ENCODE measurements at regions of chr3 and their contacts with region 1.

Region 1: DNA sequence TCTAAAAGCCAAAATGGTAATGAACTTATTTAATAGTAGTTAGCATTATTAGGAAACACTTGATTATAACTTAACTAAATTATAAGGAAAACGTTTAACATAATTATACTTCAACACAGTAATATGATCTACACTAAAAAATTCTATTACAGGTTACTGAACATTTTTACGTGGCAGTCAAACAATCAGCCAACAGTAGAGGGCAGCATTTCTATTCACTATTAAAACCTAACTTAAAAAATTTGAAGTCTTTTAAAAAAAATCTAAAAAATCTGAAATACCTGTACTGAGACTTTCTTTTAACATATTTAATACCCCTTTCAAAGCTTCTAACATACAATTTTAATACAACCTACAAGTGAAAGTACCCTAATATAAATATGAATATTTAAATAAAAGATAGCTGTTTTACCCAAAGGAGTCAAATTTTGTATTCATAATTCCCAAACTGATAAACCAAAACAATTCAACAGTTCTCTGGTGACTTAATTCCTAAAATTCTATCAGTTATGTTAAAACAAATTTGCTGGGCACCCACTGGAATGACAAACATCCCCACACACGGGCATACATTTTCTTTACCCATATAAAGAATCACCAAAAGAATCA is 41.5 kb downstream of the DLG1 start:
- DNase-seq: no peak
- ATAC-seq: peak in 1 of 4 donors; percentile 59
- H3K4me3 ChIP-seq: no peak overlapping the region
- H3K27ac ChIP-seq: no peak overlapping the region
- H3K4me1 ChIP-seq: peaks cover 65% of the 10 kb centered on the region
- H3K27me3 ChIP-seq: no peaks in the 10 kb centered on the region
- CTCF ChIP-seq: peak; percentile 74

Region 2: GRCh38 chr3:197375001-197375441 is 118.1 kb after region 1 on chr3:
- intact Hi-C with region 1: loop called (anchors 5 kb)
- DNase-seq: no peak
- ATAC-seq: peak; percentile 72 to 82 (median 78)
- H3K4me3 ChIP-seq: no peak overlapping the region
- H3K27ac ChIP-seq: no peak overlapping the region
- H3K4me1 ChIP-seq: no peaks in the 10 kb centered on the region
- H3K27me3 ChIP-seq: no peaks in the 10 kb centered on the region
- CTCF ChIP-seq: no peak

Region 3: GRCh38 chr3:197511130-197511529 is 254.2 kb after region 1 on chr3:
- intact Hi-C with region 1: loop called in 1 of 2 experiments (anchors 2 kb)
- DNase-seq: no peak
- ATAC-seq: no peak
- H3K4me3 ChIP-seq: no peak overlapping the region
- H3K27ac ChIP-seq: no peak overlapping the region
- H3K4me1 ChIP-seq: no peaks in the 10 kb centered on the region
- H3K27me3 ChIP-seq: peaks cover 0 to 4% (median 0%) of the 10 kb centered on the region in 3 donors
- CTCF ChIP-seq: no peak